Mammary epithelial cell (primary cell): ENCODE measurements at regions of chr22 and their contacts with region 1.

Region 1: GRCh38 chr22:31509061-31509762 is 12.9 kb downstream of the SFI1 start:
- DNase-seq: no peak
- H3K4me3 ChIP-seq: no peak overlapping the region
- H3K27ac ChIP-seq: no peak overlapping the region
- H3K4me1 ChIP-seq: no peaks in the 10 kb centered on the region
- H3K27me3 ChIP-seq: no peaks in the 10 kb centered on the region
- CTCF ChIP-seq: no peak

Region 2: GRCh38 chr22:31585161-31585859 is 76.1 kb after region 1 on chr22:
- CTCF ChIA-PET with region 1: no interaction called
- dilution Hi-C with region 1: loop called (anchors 10 kb)
- in situ Hi-C with region 1: no loop called
- intact Hi-C with region 1: no loop called
- DNase-seq: no peak
- H3K4me3 ChIP-seq: no peak overlapping the region
- H3K27ac ChIP-seq: no peak overlapping the region
- H3K4me1 ChIP-seq: no peaks in the 10 kb centered on the region
- H3K27me3 ChIP-seq: no peaks in the 10 kb centered on the region
- CTCF ChIP-seq: no peak